ENCODE measurements at regions of chr1 and their contacts with region 1.

Region 1: DNA sequence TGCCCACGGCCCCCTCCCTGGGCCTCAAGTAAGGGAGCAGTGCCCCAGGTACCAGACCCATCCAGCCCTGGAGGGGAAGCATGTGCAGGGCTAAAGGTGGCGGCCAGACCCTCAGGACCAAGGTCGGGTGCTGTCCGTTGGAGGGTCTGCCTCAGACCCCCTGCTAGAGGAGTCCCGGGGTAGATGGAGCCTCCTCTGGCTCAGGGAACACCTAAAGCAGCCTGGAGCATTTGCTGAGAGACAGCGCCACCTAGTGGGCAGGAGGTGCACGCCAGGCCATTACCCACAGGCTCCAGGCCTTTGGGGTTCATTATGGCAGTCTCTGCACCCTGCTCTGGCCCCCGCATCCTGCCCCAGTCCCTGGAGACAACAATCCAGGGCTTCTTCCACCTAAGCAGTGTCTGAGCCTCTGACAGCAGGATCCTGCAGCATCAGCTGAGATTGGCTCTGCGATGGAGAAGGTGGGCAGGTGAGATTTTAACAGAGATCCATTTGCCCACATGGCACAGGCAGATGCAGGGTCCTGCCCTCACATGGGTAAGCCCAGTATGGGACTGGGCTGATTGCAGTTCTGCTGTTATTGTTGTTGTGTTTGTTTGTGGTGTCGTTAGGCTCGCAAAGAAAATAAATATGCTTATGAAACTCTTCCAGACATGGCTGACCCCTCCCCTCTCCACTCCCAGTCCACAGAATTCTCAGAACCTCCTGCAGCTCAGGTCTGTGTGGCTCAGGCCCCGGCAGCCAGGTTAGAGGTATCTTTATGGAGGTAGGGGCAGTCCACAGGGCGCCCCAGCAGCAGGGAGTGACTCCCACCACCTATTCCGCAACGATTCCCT is 42.4 kb downstream of the CTNNBIP1 start:
- DNase-seq: peak; percentile 77 to 93 (median 89)
- ATAC-seq: peak; percentile 80 to 88
- H3K4me3 ChIP-seq: no peak overlapping the region
- H3K27ac ChIP-seq: no peak overlapping the region
- H3K4me1 ChIP-seq: no peaks in the 10 kb centered on the region
- H3K27me3 ChIP-seq: no peaks in the 10 kb centered on the region

Region 2: GRCh38 chr1:9629445-9630201 is 238.0 kb before region 1 on chr1:
- intact Hi-C with region 1: loop called in 3 of 4 experiments (anchors 5 to 10 kb)
- DNase-seq: peak; percentile 55 to 85 (median 81)
- ATAC-seq: peak; percentile 42 to 51
- H3K4me3 ChIP-seq: no peak overlapping the region
- H3K27ac ChIP-seq: no peak overlapping the region
- H3K4me1 ChIP-seq: no peaks in the 10 kb centered on the region
- H3K27me3 ChIP-seq: no peaks in the 10 kb centered on the region

Region 3: GRCh38 chr1:9717193-9718005 is 150.2 kb before region 1 on chr1:
- intact Hi-C with region 1: loop called in 3 of 4 experiments (anchors 5 to 10 kb)
- DNase-seq: peak in 2 of 3 donors; percentile 80 to 81
- ATAC-seq: peak; percentile 18 to 24
- H3K4me3 ChIP-seq: no peak overlapping the region
- H3K27ac ChIP-seq: no peak overlapping the region
- H3K4me1 ChIP-seq: no peaks in the 10 kb centered on the region
- H3K27me3 ChIP-seq: no peaks in the 10 kb centered on the region

Region 4: GRCh38 chr1:9724706-9725476 is 142.7 kb before region 1 on chr1:
- intact Hi-C with region 1: loop called in 1 of 4 experiments (anchors 5 kb)
- DNase-seq: peak; percentile 46 to 75 (median 75)
- ATAC-seq: peak; percentile 41 to 54
- H3K4me3 ChIP-seq: no peak overlapping the region
- H3K27ac ChIP-seq: no peak overlapping the region
- H3K4me1 ChIP-seq: no peaks in the 10 kb centered on the region
- H3K27me3 ChIP-seq: no peaks in the 10 kb centered on the region

Region 5: DNA sequence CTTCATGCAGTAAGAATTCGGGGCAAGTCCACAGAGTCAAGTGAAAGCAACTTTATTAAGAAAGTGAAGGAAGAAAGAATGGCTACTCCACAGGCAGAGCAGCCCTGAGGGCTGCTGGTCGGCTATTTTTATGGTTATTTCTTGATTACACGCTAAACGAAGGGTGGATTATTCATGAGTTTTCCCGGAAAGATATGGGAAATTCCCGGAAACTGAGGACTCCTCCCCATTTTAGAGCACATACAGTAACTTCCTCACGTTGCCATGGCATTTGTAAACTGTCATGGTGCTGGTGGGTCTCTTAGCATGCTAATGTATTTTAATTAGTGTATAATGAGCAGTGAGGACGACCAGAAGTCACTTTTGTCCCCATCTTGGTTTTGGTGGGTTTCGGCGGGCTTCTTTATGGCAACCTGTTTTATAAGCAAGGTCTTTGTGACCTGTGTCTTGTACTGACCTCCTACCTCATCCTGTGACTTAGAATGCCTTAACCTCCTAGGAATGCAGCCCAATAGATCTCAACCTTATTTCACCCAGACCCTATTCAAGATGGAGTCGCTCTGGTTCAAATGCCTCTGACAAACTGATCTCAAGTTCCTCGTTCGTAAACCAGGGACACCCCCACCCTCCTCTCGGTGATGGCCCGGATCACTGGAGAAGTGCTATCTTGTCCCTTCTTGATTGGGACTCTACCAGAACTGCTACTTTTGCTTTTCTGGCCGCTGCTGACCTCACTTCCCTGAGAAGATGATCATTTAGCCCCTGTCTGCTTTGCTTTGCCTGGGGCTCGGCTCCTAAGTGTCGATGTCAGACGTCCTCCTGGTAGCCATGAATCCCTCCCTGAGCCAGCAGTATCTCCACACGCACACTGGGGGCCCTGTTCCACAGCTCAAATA is 92.7 kb before region 1 on chr1:
- intact Hi-C with region 1: loop called in 3 of 4 experiments (anchors 5 to 10 kb)
- DNase-seq: no peak
- ATAC-seq: no peak
- H3K4me3 ChIP-seq: no peak overlapping the region
- H3K27ac ChIP-seq: no peak overlapping the region
- H3K4me1 ChIP-seq: no peaks in the 10 kb centered on the region
- H3K27me3 ChIP-seq: no peaks in the 10 kb centered on the region

Region 6: DNA sequence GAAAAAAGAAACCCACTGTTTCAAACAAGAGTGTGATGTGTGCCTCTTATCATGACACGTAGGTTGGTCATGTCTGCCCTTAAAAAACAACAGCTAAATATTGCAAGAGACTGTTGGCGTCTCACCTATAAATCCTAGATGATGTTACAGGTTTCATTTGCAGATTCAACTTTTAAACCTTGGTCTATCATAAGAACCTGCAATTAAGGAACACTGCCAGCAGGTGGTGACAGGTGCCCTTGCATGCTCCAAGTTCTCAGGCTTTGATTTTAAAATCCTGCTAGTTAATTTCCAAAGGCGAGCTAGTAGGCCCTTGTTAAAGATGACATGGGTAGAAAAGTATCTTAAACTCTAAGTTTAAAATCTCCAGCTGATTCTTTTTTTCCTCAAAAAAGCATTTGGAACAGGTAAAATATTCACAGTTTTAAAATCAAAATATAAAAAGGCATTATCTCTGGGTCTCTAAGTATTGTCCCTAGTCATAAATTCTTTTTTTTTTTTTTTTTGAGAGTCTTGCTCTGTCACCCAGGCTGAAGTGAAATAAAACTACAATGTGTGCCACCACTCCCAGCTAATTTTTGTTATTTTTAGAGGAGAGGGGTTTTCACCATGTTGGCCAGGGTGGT is 83.0 kb before region 1 on chr1:
- intact Hi-C with region 1: loop called (anchors 2 to 10 kb)
- DNase-seq: no peak
- ATAC-seq: no peak
- H3K4me3 ChIP-seq: no peak overlapping the region
- H3K27ac ChIP-seq: no peak overlapping the region
- H3K4me1 ChIP-seq: no peaks in the 10 kb centered on the region
- H3K27me3 ChIP-seq: no peaks in the 10 kb centered on the region

Region 7: GRCh38 chr1:10195570-10195969 is 327.9 kb after region 1 on chr1:
- intact Hi-C with region 1: no loop called
- DNase-seq: no peak
- ATAC-seq: no peak
- H3K4me3 ChIP-seq: no peak overlapping the region
- H3K27ac ChIP-seq: no peak overlapping the region
- H3K4me1 ChIP-seq: no peaks in the 10 kb centered on the region
- H3K27me3 ChIP-seq: no peaks in the 10 kb centered on the region

Region 8: DNA sequence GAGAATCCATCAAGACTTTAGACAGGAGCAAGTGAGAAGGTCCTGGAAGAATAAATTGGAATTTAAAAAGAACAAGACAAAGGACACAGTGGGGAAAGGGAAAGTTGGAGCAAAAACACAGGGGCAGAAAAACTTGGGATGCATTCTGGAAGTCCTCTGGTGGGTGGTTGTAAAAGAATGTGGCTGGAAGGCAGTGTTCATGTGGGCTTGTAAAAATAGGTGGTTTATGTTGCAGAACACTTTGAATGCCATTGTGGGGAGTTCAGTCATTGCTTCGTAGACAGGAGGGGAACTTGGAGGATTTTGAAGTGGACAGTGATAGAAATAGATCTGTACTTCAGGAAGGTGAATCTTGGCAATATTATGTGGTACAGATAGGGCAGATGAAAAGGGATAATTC is 357.9 kb after region 1 on chr1:
- intact Hi-C with region 1: no loop called
- DNase-seq: no peak
- ATAC-seq: no peak
- H3K4me3 ChIP-seq: no peak overlapping the region
- H3K27ac ChIP-seq: no peak overlapping the region
- H3K4me1 ChIP-seq: peaks cover 5% of the 10 kb centered on the region
- H3K27me3 ChIP-seq: no peaks in the 10 kb centered on the region